Natural killer cell (primary cell): ENCODE measurements at regions of chr6 and their contacts with region 1.

Region 1: GRCh38 chr6:157274471-157275226 is 48.7 kb downstream of the TMEM242 start:
- DNase-seq: peak; percentile 82 to 93
- ATAC-seq: peak; percentile 89 to 97 (median 90)
- H3K4me3 ChIP-seq: peak overlapping the region; percentile 78
- H3K4me3 Mint-ChIP-seq: peak overlapping the region; percentile 96
- H3K27ac ChIP-seq: peak overlapping the region; percentile 73
- H3K27ac Mint-ChIP-seq: peak overlapping the region; percentile 88 to 94
- H3K4me1 ChIP-seq: peaks cover 17% of the 10 kb centered on the region
- H3K4me1 Mint-ChIP-seq: peaks cover 7 to 19% of the 10 kb centered on the region in 2 donors
- H3K27me3 ChIP-seq: no peaks in the 10 kb centered on the region
- H3K27me3 Mint-ChIP-seq: peaks cover 0 to 4% of the 10 kb centered on the region in 2 donors
- CTCF ChIP-seq: peak; percentile 86

Region 2: DNA sequence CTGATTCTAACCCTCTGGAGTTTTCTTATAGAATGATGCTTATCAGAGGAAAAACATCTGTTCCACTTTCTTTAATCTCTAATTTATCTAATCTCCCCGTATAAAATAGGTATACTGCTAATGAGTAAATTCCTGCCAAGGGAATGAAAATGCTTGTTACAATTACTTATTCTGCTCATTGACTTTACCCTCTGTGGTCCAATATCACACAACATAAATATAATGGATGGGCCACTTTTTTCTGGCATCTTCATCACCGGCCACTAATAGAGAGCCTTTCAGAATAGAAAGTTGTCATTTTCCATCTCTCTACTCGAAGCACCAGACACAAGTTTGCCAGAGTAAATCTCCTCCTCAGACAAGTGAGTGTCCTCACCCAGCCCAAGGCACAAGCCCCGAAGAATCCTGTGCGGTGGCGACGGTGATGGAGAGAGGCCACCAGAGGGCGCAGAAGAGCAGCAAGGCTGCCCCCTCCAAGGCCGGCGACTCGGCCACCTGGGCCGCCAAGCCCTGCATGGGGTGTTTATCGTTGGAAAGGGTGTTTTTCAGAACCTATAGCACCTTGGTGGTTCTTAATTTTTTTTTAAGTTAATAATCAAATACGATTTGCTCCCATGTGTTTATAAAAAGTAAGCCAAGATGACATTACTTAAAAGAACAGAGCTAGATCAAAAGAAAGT is 710.4 kb before region 1 on chr6:
- intact Hi-C with region 1: loop called (anchors 1 kb)
- DNase-seq: peak; percentile 71 to 86
- ATAC-seq: peak; percentile 88 to 99 (median 99)
- H3K4me3 ChIP-seq: no peak overlapping the region
- H3K4me3 Mint-ChIP-seq: no peak overlapping the region
- H3K27ac ChIP-seq: no peak overlapping the region
- H3K27ac Mint-ChIP-seq: no peak overlapping the region
- H3K4me1 ChIP-seq: peaks cover 4% of the 10 kb centered on the region
- H3K4me1 Mint-ChIP-seq: peaks cover 0 to 5% of the 10 kb centered on the region in 2 donors
- H3K27me3 ChIP-seq: peaks cover 4% of the 10 kb centered on the region
- H3K27me3 Mint-ChIP-seq: peaks cover 41 to 46% of the 10 kb centered on the region in 2 donors
- CTCF ChIP-seq: peak; percentile 92

Region 3: GRCh38 chr6:156686995-156687788 is 587.5 kb before region 1 on chr6:
- intact Hi-C with region 1: loop called (anchors 5 kb)
- DNase-seq: peak; percentile 80 to 93
- ATAC-seq: peak; percentile 89 to 95 (median 93)
- H3K4me3 ChIP-seq: peak overlapping the region; percentile 95
- H3K4me3 Mint-ChIP-seq: peak overlapping the region; percentile 92
- H3K27ac ChIP-seq: peak overlapping the region; percentile 96
- H3K27ac Mint-ChIP-seq: peak overlapping the region; percentile 72 to 75
- H3K4me1 ChIP-seq: peaks cover 12% of the 10 kb centered on the region
- H3K4me1 Mint-ChIP-seq: peaks cover 12 to 16% of the 10 kb centered on the region in 2 donors
- H3K27me3 ChIP-seq: no peaks in the 10 kb centered on the region
- H3K27me3 Mint-ChIP-seq: peaks cover 6 to 10% of the 10 kb centered on the region in 2 donors
- CTCF ChIP-seq: no peak

Region 4: DNA sequence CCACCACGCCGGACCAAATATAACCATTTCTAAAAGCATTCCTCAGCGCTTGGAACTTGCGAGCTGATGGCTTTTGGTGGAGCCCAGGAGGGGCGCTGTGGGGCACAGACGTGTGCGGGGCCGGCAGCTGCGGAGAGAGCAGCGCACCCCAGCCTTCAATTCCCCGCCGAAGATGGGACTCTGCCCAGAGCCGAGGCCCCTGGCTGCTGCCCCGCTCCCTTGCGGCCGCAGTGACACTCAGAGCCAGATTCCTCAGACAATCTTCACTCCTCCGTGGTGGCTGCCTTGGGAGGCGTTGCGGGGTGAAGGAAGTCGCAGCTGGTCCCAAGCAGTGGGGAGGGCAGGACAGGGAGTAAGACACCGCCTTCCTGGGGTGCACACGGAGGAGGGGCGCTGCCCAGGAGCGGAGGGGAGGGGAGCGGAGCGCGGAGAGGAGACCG is 39.0 kb before region 1 on chr6:
- intact Hi-C with region 1: loop called (anchors 5 kb)
- DNase-seq: peak; percentile 33 to 79
- ATAC-seq: peak; percentile 64 to 76 (median 74)
- H3K4me3 ChIP-seq: peak overlapping the region; percentile 45
- H3K4me3 Mint-ChIP-seq: peak overlapping the region; percentile 96
- H3K27ac ChIP-seq: no peak overlapping the region
- H3K27ac Mint-ChIP-seq: peak overlapping the region; percentile 43 to 92
- H3K4me1 ChIP-seq: peaks cover 24% of the 10 kb centered on the region
- H3K4me1 Mint-ChIP-seq: peaks cover 19 to 33% of the 10 kb centered on the region in 2 donors
- H3K27me3 ChIP-seq: peaks cover 29% of the 10 kb centered on the region
- H3K27me3 Mint-ChIP-seq: peaks cover 31 to 36% of the 10 kb centered on the region in 2 donors
- CTCF ChIP-seq: peak; percentile 58

Region 5: DNA sequence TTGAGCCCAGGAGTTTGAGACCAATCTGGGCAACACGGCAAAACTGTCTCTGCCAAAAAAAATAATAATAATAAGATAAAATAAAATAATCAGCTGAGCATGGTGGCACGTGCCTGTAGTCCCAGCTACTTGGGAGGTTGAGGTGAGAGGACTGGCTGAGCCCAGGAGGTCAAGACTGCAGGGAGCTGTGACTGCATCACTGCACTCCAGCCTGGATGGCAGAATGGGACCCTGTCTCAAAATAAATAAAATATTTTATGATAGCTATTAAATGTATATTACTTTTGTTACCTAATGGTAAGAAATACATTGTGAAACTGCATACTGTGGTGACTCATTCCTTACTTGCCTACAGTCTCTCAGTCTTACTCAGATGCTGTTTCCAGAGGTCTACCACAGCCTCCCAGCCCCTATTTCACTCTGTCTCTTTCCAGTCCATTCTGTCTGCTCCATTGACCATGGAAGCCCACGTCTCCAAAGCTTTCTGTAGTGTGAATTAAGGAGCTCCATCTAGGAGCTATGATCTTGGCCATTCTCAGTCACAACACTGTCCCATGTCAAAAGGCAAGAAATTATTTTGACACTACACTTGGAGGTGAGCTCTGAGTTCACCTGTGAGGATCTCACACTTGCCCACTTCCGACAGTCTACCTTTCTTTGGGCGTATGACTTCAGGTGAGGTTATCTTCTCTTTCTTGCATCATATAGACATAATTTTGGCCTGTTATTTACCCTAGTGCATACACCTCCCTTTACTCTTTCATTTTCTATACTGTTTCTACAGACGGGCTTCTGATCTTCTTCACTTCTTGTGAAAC is 526.0 kb after region 1 on chr6:
- intact Hi-C with region 1: no loop called
- DNase-seq: no peak
- ATAC-seq: no peak
- H3K4me3 ChIP-seq: no peak overlapping the region
- H3K4me3 Mint-ChIP-seq: no peak overlapping the region
- H3K27ac ChIP-seq: no peak overlapping the region
- H3K27ac Mint-ChIP-seq: no peak overlapping the region
- H3K4me1 ChIP-seq: no peaks in the 10 kb centered on the region
- H3K4me1 Mint-ChIP-seq: no peaks in the 10 kb centered on the region
- H3K27me3 ChIP-seq: no peaks in the 10 kb centered on the region
- H3K27me3 Mint-ChIP-seq: peaks cover 27 to 48% of the 10 kb centered on the region in 2 donors
- CTCF ChIP-seq: no peak